Activated CD4-positive, alpha-beta T cell treated with anti-CD3 and anti-CD28 coated beads for 36 hours (primary cell): ENCODE measurements at regions of chr3 and their contacts with region 1.

Region 1: GRCh38 chr3:94069194-94069813 is 6.4 kb downstream of the NSUN3 start:
- DNase-seq: no peak
- ATAC-seq: no peak
- H3K4me3 Mint-ChIP-seq: no peak overlapping the region
- H3K27ac Mint-ChIP-seq: no peak overlapping the region
- H3K4me1 Mint-ChIP-seq: peaks cover 77% of the 10 kb centered on the region
- H3K27me3 Mint-ChIP-seq: no peaks in the 10 kb centered on the region

Region 2: GRCh38 chr3:93855406-93855805 is 213.9 kb before region 1 on chr3:
- CTCF ChIA-PET with region 1: no interaction called
- POLR2A ChIA-PET with region 1: no interaction called
- intact Hi-C with region 1: loop called in 1 of 2 experiments (anchors 10 kb)
- DNase-seq: no peak
- ATAC-seq: no peak
- H3K4me3 Mint-ChIP-seq: no peak overlapping the region
- H3K27ac Mint-ChIP-seq: no peak overlapping the region
- H3K4me1 Mint-ChIP-seq: no peaks in the 10 kb centered on the region
- H3K27me3 Mint-ChIP-seq: no peaks in the 10 kb centered on the region